ENCODE measurements at regions of chr5 and their contacts with region 1.

Region 1: DNA sequence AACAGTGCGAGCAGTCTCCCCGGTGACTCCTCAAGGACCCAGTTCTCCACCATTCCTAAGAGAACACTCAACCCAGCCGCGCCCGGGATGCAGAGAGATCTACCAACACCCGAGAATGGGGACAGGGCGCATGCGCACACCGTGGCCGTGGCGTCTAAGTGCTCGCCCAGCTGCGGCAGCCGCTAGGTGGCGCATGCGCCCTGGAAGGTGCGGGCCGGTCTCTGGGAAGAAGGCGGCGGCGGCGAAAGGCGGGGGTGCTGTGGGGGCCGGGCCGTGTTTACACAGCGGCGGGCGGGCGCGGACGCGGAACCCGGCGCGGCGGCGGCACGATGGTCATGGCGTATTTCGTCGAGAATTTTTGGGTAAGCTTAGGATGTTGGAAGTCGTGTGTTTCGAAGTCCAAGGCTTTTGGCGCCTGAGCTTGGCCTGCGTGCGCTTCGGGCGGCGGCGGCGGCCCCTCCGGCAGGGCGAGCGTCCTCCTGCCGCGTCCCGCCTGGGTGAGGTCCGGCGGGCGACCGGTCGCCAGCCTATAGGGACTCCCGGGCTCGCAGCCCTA is at the start of gene FCHO2:
- DNase-seq: peak; percentile 96
- ATAC-seq: peak; percentile 96
- H3K4me3 ChIP-seq: peak within 1 kb of the TSS; percentile 71 to 89 (median 77)
- H3K4me3 Mint-ChIP-seq: peak within 1 kb of the TSS; percentile 98
- H3K27ac ChIP-seq: peak within 1 kb of the TSS in 1 of 2 donors; percentile 68
- H3K27ac Mint-ChIP-seq: peak within 1 kb of the TSS; percentile 94
- H3K4me1 ChIP-seq: peaks cover 11% of the 10 kb centered on the region in 2 donors
- H3K4me1 Mint-ChIP-seq: peaks cover 19% of the 10 kb centered on the region
- H3K27me3 ChIP-seq: peaks cover 0 to 28% (median 8%) of the 10 kb centered on the region in 4 experiments
- H3K27me3 Mint-ChIP-seq: peaks cover 46% of the 10 kb centered on the region
- CTCF ChIP-seq: peak; percentile 76
- total RNA-seq, gene FCHO2: 6.5 and 11.0 TPM in 2 replicates

Region 2: DNA sequence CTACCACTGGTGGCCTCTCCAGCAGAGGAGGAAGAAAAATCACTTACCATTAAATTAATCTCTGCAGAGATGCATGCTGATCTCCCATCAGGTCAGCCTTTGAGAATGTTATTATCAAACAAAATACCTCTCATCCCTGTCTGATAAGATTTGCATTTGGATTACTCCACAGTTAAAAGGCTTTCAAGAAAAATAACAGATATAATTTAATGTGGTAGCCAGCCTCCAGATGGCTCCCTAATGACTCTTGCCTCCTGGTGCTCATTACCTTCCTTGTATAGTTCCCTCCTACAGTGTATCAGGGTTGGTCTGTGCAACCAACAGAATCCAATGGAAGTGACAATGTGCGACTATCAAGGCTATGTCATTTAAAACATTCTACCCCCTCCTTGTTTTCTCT is 202.9 kb before region 1 on chr5:
- CTCF ChIA-PET with region 1: no interaction called
- POLR2A ChIA-PET with region 1: no interaction called
- intact Hi-C with region 1: no loop called
- DNase-seq: no peak
- ATAC-seq: no peak
- H3K4me3 ChIP-seq: no peak overlapping the region
- H3K4me3 Mint-ChIP-seq: no peak overlapping the region
- H3K27ac ChIP-seq: no peak overlapping the region
- H3K27ac Mint-ChIP-seq: no peak overlapping the region
- H3K4me1 ChIP-seq: no peaks in the 10 kb centered on the region
- H3K4me1 Mint-ChIP-seq: no peaks in the 10 kb centered on the region
- H3K27me3 ChIP-seq: peaks cover 0 to 3% (median 0%) of the 10 kb centered on the region in 4 experiments
- H3K27me3 Mint-ChIP-seq: peaks cover 7% of the 10 kb centered on the region
- CTCF ChIP-seq: no peak

Region 3: GRCh38 chr5:72847989-72848473 is 107.8 kb before region 1 on chr5:
- CTCF ChIA-PET with region 1: no interaction called
- POLR2A ChIA-PET with region 1: no interaction called
- intact Hi-C with region 1: loop called (anchors 2 kb)
- DNase-seq: peak; percentile 90
- ATAC-seq: peak; percentile 75
- H3K4me3 ChIP-seq: peak overlapping the region; percentile 75 to 96 (median 91)
- H3K4me3 Mint-ChIP-seq: peak overlapping the region; percentile 99
- H3K27ac ChIP-seq: peak overlapping the region; percentile 83 to 89
- H3K27ac Mint-ChIP-seq: peak overlapping the region; percentile 99
- H3K4me1 ChIP-seq: peaks cover 18 to 40% of the 10 kb centered on the region in 2 donors
- H3K4me1 Mint-ChIP-seq: peaks cover 54% of the 10 kb centered on the region
- H3K27me3 ChIP-seq: no peaks in the 10 kb centered on the region
- H3K27me3 Mint-ChIP-seq: no peaks in the 10 kb centered on the region
- CTCF ChIP-seq: no peak

Region 4: DNA sequence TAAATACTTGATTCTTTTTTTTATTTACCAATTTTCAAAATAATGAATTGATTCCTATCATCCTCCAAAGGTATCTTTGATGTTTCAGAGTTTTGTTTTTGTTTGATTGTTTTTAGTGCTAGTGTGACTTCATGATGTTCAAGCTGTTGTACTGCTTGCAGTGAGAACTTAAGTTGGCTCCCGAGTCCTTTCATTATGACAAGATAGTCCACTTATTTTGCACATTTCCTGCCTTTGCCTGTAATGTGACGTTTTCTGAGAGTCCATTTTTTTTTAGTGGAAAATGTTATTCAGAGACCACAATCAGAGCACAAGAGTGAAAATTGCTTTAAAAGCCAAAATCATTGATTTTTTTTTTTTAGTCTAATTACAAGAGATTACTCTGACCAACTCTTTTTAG is 60.1 kb before region 1 on chr5:
- CTCF ChIA-PET with region 1: no interaction called
- POLR2A ChIA-PET with region 1: no interaction called
- intact Hi-C with region 1: no loop called
- DNase-seq: no peak
- ATAC-seq: no peak
- H3K4me3 ChIP-seq: no peak overlapping the region
- H3K4me3 Mint-ChIP-seq: no peak overlapping the region
- H3K27ac ChIP-seq: no peak overlapping the region
- H3K27ac Mint-ChIP-seq: no peak overlapping the region
- H3K4me1 ChIP-seq: no peaks in the 10 kb centered on the region
- H3K4me1 Mint-ChIP-seq: no peaks in the 10 kb centered on the region
- H3K27me3 ChIP-seq: no peaks in the 10 kb centered on the region
- H3K27me3 Mint-ChIP-seq: no peaks in the 10 kb centered on the region
- CTCF ChIP-seq: no peak

Region 5: GRCh38 chr5:72908664-72909063 is 47.2 kb before region 1 on chr5:
- CTCF ChIA-PET with region 1: no interaction called
- POLR2A ChIA-PET with region 1: no interaction called
- intact Hi-C with region 1: loop called (anchors 5 kb)
- DNase-seq: no peak
- ATAC-seq: no peak
- H3K4me3 ChIP-seq: no peak overlapping the region
- H3K4me3 Mint-ChIP-seq: no peak overlapping the region
- H3K27ac ChIP-seq: no peak overlapping the region
- H3K27ac Mint-ChIP-seq: no peak overlapping the region
- H3K4me1 ChIP-seq: no peaks in the 10 kb centered on the region
- H3K4me1 Mint-ChIP-seq: no peaks in the 10 kb centered on the region
- H3K27me3 ChIP-seq: no peaks in the 10 kb centered on the region
- H3K27me3 Mint-ChIP-seq: no peaks in the 10 kb centered on the region
- CTCF ChIP-seq: no peak

Region 6: GRCh38 chr5:72996632-72997031 is 40.8 kb after region 1 on chr5:
- CTCF ChIA-PET with region 1: no interaction called
- POLR2A ChIA-PET with region 1: no interaction called
- intact Hi-C with region 1: no loop called
- DNase-seq: no peak
- ATAC-seq: no peak
- H3K4me3 ChIP-seq: no peak overlapping the region
- H3K4me3 Mint-ChIP-seq: no peak overlapping the region
- H3K27ac ChIP-seq: no peak overlapping the region
- H3K27ac Mint-ChIP-seq: no peak overlapping the region
- H3K4me1 ChIP-seq: no peaks in the 10 kb centered on the region
- H3K4me1 Mint-ChIP-seq: no peaks in the 10 kb centered on the region
- H3K27me3 ChIP-seq: no peaks in the 10 kb centered on the region
- H3K27me3 Mint-ChIP-seq: no peaks in the 10 kb centered on the region
- CTCF ChIP-seq: no peak

Region 7: GRCh38 chr5:73448463-73449136 is 492.8 kb after region 1 on chr5 and contains the start of gene FOXD1:
- CTCF ChIA-PET with region 1: interaction called, 4 read pairs
- POLR2A ChIA-PET with region 1: no interaction called
- intact Hi-C with region 1: loop called (anchors 5 kb)
- DNase-seq: peak; percentile 74
- ATAC-seq: peak; percentile 56
- H3K4me3 ChIP-seq: peak within 1 kb of the TSS; percentile 26 to 61 (median 55)
- H3K4me3 Mint-ChIP-seq: peak within 1 kb of the TSS; percentile 94
- H3K27ac ChIP-seq: no peak within 1 kb of the TSS
- H3K27ac Mint-ChIP-seq: peak within 1 kb of the TSS; percentile 79
- H3K4me1 ChIP-seq: peaks cover 25 to 60% of the 10 kb centered on the region in 2 donors
- H3K4me1 Mint-ChIP-seq: peaks cover 22% of the 10 kb centered on the region
- H3K27me3 ChIP-seq: peaks cover 9 to 85% (median 72%) of the 10 kb centered on the region in 4 experiments
- H3K27me3 Mint-ChIP-seq: peaks cover 61% of the 10 kb centered on the region
- CTCF ChIP-seq: no peak
- total RNA-seq, gene FOXD1: 0.44 and 0.49 TPM in 2 replicates

Region 8: DNA sequence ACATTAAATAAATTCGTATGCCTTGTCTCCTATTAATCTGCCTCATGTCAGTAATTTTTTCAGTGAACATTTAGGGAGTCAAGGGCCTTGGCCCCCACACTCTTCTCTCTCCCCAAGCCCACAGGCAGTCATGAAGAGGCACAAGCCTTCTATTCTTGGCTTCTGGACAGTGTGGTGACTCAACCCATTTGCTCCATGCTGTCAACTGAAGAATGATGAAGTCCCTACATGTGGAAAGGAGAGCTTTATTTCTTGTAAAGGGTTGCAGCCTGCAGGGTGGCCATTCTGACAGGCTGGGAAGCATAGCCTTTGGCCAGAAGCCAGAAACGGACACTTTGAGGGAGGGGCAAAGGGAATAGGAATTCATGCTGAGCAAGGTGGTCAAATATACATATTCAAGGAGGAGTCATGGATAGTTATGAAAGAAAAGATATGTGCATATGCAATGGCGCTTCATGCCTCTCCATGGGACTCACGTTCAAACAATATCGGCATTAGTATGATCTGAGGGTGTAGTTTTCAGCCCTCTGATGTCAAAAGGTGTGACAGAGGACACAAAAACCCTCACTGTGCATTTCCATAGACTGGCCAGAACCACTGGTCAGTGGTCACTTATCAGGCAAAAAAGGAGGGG is 578.3 kb after region 1 on chr5:
- CTCF ChIA-PET with region 1: interaction called, 3 read pairs
- POLR2A ChIA-PET with region 1: no interaction called
- intact Hi-C with region 1: loop called (anchors 10 kb)
- DNase-seq: no peak
- ATAC-seq: no peak
- H3K4me3 ChIP-seq: no peak overlapping the region
- H3K4me3 Mint-ChIP-seq: no peak overlapping the region
- H3K27ac ChIP-seq: no peak overlapping the region
- H3K27ac Mint-ChIP-seq: no peak overlapping the region
- H3K4me1 ChIP-seq: no peaks in the 10 kb centered on the region
- H3K4me1 Mint-ChIP-seq: no peaks in the 10 kb centered on the region
- H3K27me3 ChIP-seq: peaks cover 0 to 5% (median 2%) of the 10 kb centered on the region in 4 experiments
- H3K27me3 Mint-ChIP-seq: peaks cover 30% of the 10 kb centered on the region
- CTCF ChIP-seq: no peak

Measured in B cell (primary cell).